T-cell (primary cell): ENCODE measurements at regions of chr5 and their contacts with region 1.

Region 1: GRCh38 chr5:40694433-40694832 is 14.7 kb downstream of the PTGER4 start:
- DNase-seq: no peak
- ATAC-seq: no peak
- H3K4me3 ChIP-seq: no peak overlapping the region
- H3K4me3 Mint-ChIP-seq: peak overlapping the region in 1 of 3 donors; percentile 12
- H3K27ac ChIP-seq: no peak overlapping the region
- H3K27ac Mint-ChIP-seq: no peak overlapping the region
- H3K4me1 ChIP-seq: peaks cover 4 to 21% of the 10 kb centered on the region in 2 experiments
- H3K4me1 Mint-ChIP-seq: peaks cover 27 to 48% (median 32%) of the 10 kb centered on the region in 3 donors
- H3K27me3 ChIP-seq: no peaks in the 10 kb centered on the region
- H3K27me3 Mint-ChIP-seq: no peaks in the 10 kb centered on the region

Region 2: DNA sequence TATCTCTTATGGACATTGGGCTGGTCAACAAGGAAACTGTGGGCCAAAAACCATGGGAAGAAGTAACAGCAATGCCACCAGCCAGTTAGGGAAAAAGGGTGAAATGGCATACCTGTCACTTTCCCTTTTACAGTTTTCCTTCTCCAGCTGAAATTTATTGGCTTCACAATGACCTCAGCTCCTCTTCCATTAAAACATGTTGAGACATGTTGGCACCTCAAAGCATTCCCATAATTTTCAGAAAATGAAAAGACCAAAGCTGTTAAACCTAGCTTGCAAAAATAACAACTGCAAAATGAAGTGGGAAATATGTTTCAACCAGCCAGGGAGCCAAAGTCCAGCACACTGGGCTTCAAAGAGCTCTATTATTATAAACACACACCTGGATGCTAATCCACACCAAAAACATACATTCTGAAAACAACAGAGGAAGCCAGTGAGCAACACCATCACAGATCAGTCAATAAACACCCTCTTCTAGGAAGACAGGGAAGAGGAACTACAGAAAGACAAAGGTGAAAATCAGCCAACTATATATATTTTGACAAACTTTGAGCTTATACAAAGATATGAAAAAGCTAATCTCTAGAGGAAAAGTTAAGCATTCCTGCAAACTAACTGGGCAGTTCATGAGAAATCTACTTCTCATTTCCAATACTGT is 93.1 kb before region 1 on chr5:
- CTCF ChIA-PET with region 1: no interaction called
- POLR2A ChIA-PET with region 1: interaction called in 1 of 2 experiments, 10 read pairs
- DNase-seq: no peak
- ATAC-seq: peak in 1 of 4 experiments; percentile 26
- H3K4me3 ChIP-seq: no peak overlapping the region
- H3K4me3 Mint-ChIP-seq: no peak overlapping the region
- H3K27ac ChIP-seq: no peak overlapping the region
- H3K27ac Mint-ChIP-seq: no peak overlapping the region
- H3K4me1 ChIP-seq: peaks cover 8 to 20% of the 10 kb centered on the region in 2 experiments
- H3K4me1 Mint-ChIP-seq: peaks cover 31 to 56% (median 44%) of the 10 kb centered on the region in 3 donors
- H3K27me3 ChIP-seq: no peaks in the 10 kb centered on the region
- H3K27me3 Mint-ChIP-seq: peaks cover 0 to 5% of the 10 kb centered on the region in 2 donors

Region 3: GRCh38 chr5:40623480-40624420 is 70.7 kb before region 1 on chr5:
- CTCF ChIA-PET with region 1: interaction called in 1 of 2 experiments, 10 read pairs
- POLR2A ChIA-PET with region 1: interaction called in 1 of 2 experiments, 5 read pairs
- DNase-seq: peak in 30 of 35 experiments; percentile 2 to 70 (median 26)
- ATAC-seq: peak; percentile 86 to 99 (median 96)
- H3K4me3 ChIP-seq: no peak overlapping the region
- H3K4me3 Mint-ChIP-seq: peak overlapping the region in 2 of 3 donors; percentile 14 to 43
- H3K27ac ChIP-seq: peak overlapping the region; percentile 42
- H3K27ac Mint-ChIP-seq: peak overlapping the region; percentile 88 to 93
- H3K4me1 ChIP-seq: peaks cover 11 to 26% of the 10 kb centered on the region in 2 experiments
- H3K4me1 Mint-ChIP-seq: peaks cover 40 to 56% (median 44%) of the 10 kb centered on the region in 3 donors
- H3K27me3 ChIP-seq: no peaks in the 10 kb centered on the region
- H3K27me3 Mint-ChIP-seq: no peaks in the 10 kb centered on the region

Region 4: DNA sequence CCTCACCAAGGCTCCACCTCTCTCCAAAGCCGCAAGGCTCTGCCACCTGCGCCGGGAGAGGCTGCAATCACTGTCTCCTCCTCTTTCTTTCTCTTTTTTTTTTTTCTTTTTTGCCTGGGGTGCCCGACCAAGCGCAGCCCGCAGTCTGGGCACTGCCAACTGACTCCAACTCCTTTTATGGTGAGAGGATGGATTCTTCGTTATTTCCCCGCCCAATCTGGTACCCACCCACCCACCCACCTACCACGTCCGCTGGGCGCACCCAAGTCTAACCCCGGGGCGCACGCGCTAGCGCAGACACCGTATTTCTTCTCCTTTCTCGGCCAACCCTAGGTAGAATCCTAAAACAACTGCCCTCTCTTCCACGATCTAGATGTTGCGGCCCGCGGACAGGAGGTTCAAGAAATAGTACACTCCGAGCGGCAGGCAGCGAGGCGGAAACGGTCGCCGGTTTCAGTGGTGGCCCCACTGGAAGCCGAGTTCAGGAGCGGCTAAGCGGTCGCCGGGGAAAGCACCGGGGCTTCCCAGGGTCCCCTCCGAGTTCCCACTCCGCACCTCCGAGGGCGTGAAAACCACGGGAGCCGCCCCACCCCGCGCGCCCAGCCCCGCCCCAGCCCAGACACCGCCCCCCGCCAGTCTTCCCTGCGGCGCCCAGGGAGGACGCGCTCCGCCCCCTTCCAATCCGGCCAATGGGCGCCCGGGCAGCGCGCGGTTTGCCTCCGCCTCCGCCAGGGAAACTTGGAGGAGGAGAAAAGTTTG is 15.1 kb before region 1 on chr5:
- CTCF ChIA-PET with region 1: interaction called in 1 of 2 experiments, 4 read pairs
- POLR2A ChIA-PET with region 1: interaction called in 1 of 2 experiments, 10 read pairs
- DNase-seq: peak; percentile 78 to 94 (median 85)
- ATAC-seq: peak; percentile 75 to 78 (median 76)
- H3K4me3 ChIP-seq: peak overlapping the region; percentile 90 to 95
- H3K4me3 Mint-ChIP-seq: peak overlapping the region; percentile 92 to 100 (median 99)
- H3K27ac ChIP-seq: peak overlapping the region; percentile 96
- H3K27ac Mint-ChIP-seq: peak overlapping the region; percentile 95 to 99
- H3K4me1 ChIP-seq: peaks cover 30 to 46% of the 10 kb centered on the region in 2 experiments
- H3K4me1 Mint-ChIP-seq: peaks cover 53 to 82% (median 62%) of the 10 kb centered on the region in 3 donors
- H3K27me3 ChIP-seq: no peaks in the 10 kb centered on the region
- H3K27me3 Mint-ChIP-seq: no peaks in the 10 kb centered on the region